Heart left ventricle (tissue), 16 donors: ENCODE measurements at regions of chr11 and their contacts with region 1.

Region 1: GRCh38 chr11:70628855-70629844 is 230.8 kb downstream of the CTTN start:
- DNase-seq: peak in 4 of 5 donors; percentile 55 to 74 (median 66)
- ATAC-seq: peak; percentile 82 to 90 (median 86)
- H3K4me3 ChIP-seq: no peak overlapping the region
- H3K27ac ChIP-seq: peak overlapping the region in 10 of 12 donors; percentile 30 to 86 (median 70)
- H3K4me1 ChIP-seq: peaks cover 0 to 17% (median 4%) of the 10 kb centered on the region in 12 donors
- H3K27me3 ChIP-seq: peaks cover 0 to 10% (median 0%) of the 10 kb centered on the region in 9 donors
- CTCF ChIP-seq: no peak
- POLR2A ChIP-seq: no peak

Region 2: DNA sequence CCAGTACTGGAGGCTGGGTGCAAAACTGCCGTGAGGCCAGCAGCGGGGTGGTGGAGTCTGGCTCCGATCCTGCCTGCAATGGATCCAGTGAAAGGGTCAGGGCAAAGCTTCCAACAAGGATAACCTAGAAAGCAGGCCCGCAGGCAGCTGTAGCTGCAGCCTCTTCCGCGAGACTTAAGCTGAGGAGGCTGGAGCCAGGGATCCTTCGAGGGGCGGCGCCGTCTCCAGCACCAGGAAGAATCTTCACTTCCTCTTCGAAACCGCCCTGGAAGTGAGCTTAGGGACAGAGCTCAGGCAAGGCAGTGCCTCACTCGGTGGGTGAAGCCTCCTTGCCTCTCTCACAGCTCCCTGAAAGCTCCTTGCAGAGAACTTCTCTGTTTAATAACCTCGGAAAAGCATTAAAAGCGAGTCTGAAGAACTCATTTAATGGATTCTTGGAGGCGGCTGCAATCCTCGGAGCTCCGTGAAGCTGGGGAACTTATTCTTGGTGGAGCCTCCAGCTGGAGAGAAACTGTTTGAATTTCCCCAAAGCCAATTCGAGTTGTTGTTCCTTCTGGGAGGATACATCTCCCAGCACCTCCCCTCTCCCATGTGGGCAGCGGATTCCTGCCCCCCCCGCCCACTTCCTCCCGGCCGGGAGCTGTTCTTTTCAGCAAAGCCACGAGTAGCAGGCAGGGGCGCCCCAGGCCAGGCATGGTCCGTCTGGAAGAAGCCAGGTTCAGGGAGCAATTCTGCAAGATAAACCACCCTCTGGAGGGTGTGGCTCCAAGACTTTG is 60.9 kb before region 1 on chr11:
- intact Hi-C with region 1: loop called in 2 of 10 experiments (anchors 1 to 5 kb)
- DNase-seq: peak; percentile 49 to 79 (median 66)
- ATAC-seq: peak; percentile 74 to 89 (median 86)
- H3K4me3 ChIP-seq: peak overlapping the region; percentile 9 to 61 (median 44)
- H3K27ac ChIP-seq: peak overlapping the region; percentile 31 to 93 (median 77)
- H3K4me1 ChIP-seq: peaks cover 0 to 21% (median 15%) of the 10 kb centered on the region in 12 donors
- H3K27me3 ChIP-seq: peaks cover 0 to 9% (median 0%) of the 10 kb centered on the region in 9 donors
- CTCF ChIP-seq: peak in 11 of 12 donors; percentile 10 to 59 (median 33)
- POLR2A ChIP-seq: no peak

Region 3: GRCh38 chr11:70579341-70579955 is 49.7 kb before region 1 on chr11:
- intact Hi-C with region 1: no loop called
- DNase-seq: peak in 1 of 5 donors; percentile 58
- ATAC-seq: no peak
- H3K4me3 ChIP-seq: no peak overlapping the region
- H3K27ac ChIP-seq: no peak overlapping the region
- H3K4me1 ChIP-seq: no peaks in the 10 kb centered on the region
- H3K27me3 ChIP-seq: no peaks in the 10 kb centered on the region
- CTCF ChIP-seq: no peak
- POLR2A ChIP-seq: no peak